Esophagus muscularis mucosa (tissue), 4 donors: ENCODE measurements at regions of chrX and their contacts with region 1.

Region 1: GRCh38 chrX:134631426-134632346 is 26.6 kb downstream of the PLAC1 start:
- DNase-seq: peak; percentile 90
- H3K4me3 ChIP-seq: no peak overlapping the region
- H3K27ac ChIP-seq: no peak overlapping the region
- H3K4me1 ChIP-seq: peaks cover 0 to 14% (median 8%) of the 10 kb centered on the region in 4 donors
- H3K27me3 ChIP-seq: no peaks in the 10 kb centered on the region
- CTCF ChIP-seq: no peak
- EP300 ChIP-seq: no peak
- POLR2A ChIP-seq: no peak

Region 2: DNA sequence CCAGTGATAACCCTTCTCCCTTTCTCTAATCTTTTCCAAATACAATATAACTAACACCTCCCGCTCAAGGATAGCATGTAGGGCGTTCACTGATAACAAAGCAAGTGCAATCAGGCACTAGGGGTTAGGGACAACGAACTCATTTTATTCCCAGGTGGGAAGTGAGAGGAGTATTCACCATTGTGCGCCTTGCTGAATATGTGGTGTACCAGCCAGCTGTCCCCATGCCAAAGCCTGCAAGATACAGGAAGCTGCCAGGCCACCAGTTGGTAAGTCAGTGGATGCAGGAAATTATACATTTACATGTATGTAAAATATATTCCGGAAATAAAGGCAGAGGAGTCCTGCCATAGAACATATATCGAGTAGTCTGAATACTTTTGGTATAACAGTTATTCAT is 178.1 kb before region 1 on chrX:
- intact Hi-C with region 1: no loop called
- DNase-seq: no peak
- H3K4me3 ChIP-seq: no peak overlapping the region
- H3K27ac ChIP-seq: no peak overlapping the region
- H3K4me1 ChIP-seq: no peaks in the 10 kb centered on the region
- H3K27me3 ChIP-seq: no peaks in the 10 kb centered on the region
- CTCF ChIP-seq: no peak
- EP300 ChIP-seq: no peak
- POLR2A ChIP-seq: no peak

Region 3: GRCh38 chrX:134642386-134642785 is 10.7 kb after region 1 on chrX:
- intact Hi-C with region 1: loop called (anchors 1 kb)
- DNase-seq: no peak
- H3K4me3 ChIP-seq: no peak overlapping the region
- H3K27ac ChIP-seq: no peak overlapping the region
- H3K4me1 ChIP-seq: no peaks in the 10 kb centered on the region
- H3K27me3 ChIP-seq: no peaks in the 10 kb centered on the region
- CTCF ChIP-seq: no peak
- EP300 ChIP-seq: no peak
- POLR2A ChIP-seq: no peak

Region 4: GRCh38 chrX:134734466-134734952 is 102.8 kb after region 1 on chrX:
- intact Hi-C with region 1: loop called (anchors 10 kb)
- DNase-seq: no peak
- H3K4me3 ChIP-seq: no peak overlapping the region
- H3K27ac ChIP-seq: no peak overlapping the region
- H3K4me1 ChIP-seq: peaks cover 4 to 36% (median 33%) of the 10 kb centered on the region in 4 donors
- H3K27me3 ChIP-seq: no peaks in the 10 kb centered on the region
- CTCF ChIP-seq: no peak
- EP300 ChIP-seq: no peak
- POLR2A ChIP-seq: no peak